OCI-LY7 (cell line): ENCODE measurements at regions of chr6 and their contacts with region 1.

Region 1: DNA sequence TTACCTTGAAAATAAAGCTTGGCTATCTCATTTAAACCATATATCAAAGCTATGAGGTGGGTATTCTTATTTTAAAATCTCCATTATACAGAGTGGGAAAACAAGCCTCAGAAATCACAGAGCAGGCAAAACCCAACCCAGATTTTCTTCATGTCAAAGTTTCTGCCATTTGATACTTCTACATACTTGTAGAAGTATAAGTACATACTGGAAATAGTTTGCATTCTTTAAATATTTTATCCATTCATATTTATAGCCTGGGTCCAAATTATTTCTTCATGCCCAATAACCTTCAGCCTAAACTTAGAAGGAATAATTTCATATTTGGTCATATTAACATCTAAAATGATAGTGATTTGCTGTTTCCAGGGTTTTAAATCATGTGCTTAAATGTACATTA is 61.8 kb downstream of the MLIP start:
- DNase-seq: no peak
- H3K4me3 ChIP-seq: no peak overlapping the region
- H3K27ac ChIP-seq: no peak overlapping the region
- H3K4me1 ChIP-seq: no peaks in the 10 kb centered on the region
- CTCF ChIP-seq: no peak

Region 2: GRCh38 chr6:52953911-52954839 is 1218.9 kb before region 1 on chr6:
- CTCF ChIA-PET with region 1: no interaction called
- POLR2A ChIA-PET with region 1: no interaction called
- intact Hi-C with region 1: loop called (anchors 10 kb)
- DNase-seq: no peak
- H3K4me3 ChIP-seq: no peak overlapping the region
- H3K27ac ChIP-seq: no peak overlapping the region
- H3K4me1 ChIP-seq: no peaks in the 10 kb centered on the region
- CTCF ChIP-seq: no peak

Region 3: DNA sequence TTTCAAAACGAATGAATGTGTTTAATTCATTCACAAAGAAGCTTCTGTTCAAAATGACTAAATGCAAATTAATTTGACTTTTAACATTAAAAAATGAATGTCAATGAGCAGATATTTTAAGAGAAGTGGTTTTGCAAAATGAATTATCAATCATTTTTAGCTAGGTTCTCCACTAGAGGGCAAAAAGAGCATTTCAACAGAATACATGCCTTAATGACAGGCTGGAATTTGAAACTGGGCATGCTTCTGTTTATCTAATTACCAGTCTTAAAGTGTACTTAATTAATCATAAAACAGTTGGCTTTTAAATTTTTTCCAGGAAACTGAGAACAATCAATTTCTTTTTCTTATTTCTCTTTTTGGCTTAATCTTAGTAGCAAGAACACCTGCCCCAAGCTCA is 71.3 kb after region 1 on chr6:
- CTCF ChIA-PET with region 1: no interaction called
- POLR2A ChIA-PET with region 1: no interaction called
- intact Hi-C with region 1: no loop called
- DNase-seq: peak; percentile 11
- H3K4me3 ChIP-seq: no peak overlapping the region
- H3K27ac ChIP-seq: no peak overlapping the region
- H3K4me1 ChIP-seq: no peaks in the 10 kb centered on the region
- CTCF ChIP-seq: peak; percentile 75

Region 4: DNA sequence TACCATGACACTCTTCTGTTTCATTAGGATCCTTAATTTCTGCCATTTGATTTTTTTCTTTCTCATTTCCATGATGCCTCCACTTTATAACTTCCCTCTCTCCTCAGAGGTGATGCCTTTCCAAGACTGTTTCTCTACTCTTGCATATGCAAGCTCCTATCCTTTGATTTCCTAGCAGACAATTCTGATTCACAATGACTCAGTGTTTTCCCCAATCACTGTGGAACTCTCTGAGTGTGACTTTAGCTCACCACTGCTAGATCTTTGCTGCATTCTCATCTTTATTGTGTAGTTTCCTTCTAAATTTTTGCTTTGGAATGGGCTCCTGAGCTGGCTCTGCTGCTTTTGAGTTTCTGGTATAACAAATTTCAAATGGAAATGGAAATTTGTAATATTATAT is 320.0 kb after region 1 on chr6:
- CTCF ChIA-PET with region 1: no interaction called
- POLR2A ChIA-PET with region 1: no interaction called
- intact Hi-C with region 1: no loop called
- DNase-seq: no peak
- H3K4me3 ChIP-seq: no peak overlapping the region
- H3K27ac ChIP-seq: no peak overlapping the region
- H3K4me1 ChIP-seq: no peaks in the 10 kb centered on the region
- CTCF ChIP-seq: no peak